H1 (cell line): ENCODE measurements at regions of chr3 and their contacts with region 1.

Region 1: GRCh38 chr3:45593708-45594609 is 592 bp upstream of the LIMD1 start:
- DNase-seq: peak in 1 of 2 experiments; percentile 88
- H3K4me3 ChIP-seq: peak overlapping the region; percentile 60 to 85 (median 74)
- H3K27ac ChIP-seq: peak overlapping the region; percentile 52; the same call in 1 of the 2 replicates
- H3K4me1 ChIP-seq: peaks cover 0 to 20% (median 10%) of the 10 kb centered on the region in 4 experiments; a peak in 6 of 7 replicates
- H3K27me3 ChIP-seq: no peaks in the 10 kb centered on the region; a peak in 2 of 7 replicates
- CTCF ChIP-seq: no peak
- EP300 ChIP-seq: no peak
- POLR2A ChIP-seq: peak in 1 of 2 experiments; percentile 68; a peak in 2 of 3 replicates
- RAD21 ChIP-seq: 0 out of 4 replicates have a peak, but pooled peaks of 1 of the 2 experiments have one; percentile 6

Region 2: GRCh38 chr3:45560281-45560971 is 33.5 kb before region 1 on chr3:
- CTCF ChIA-PET with region 1: no interaction called
- POLR2A ChIA-PET with region 1: no interaction called
- DNase-seq: no peak
- H3K4me3 ChIP-seq: no peak overlapping the region
- H3K27ac ChIP-seq: no peak overlapping the region
- H3K4me1 ChIP-seq: no peaks in the 10 kb centered on the region
- H3K27me3 ChIP-seq: no peaks in the 10 kb centered on the region
- CTCF ChIP-seq: no peak
- EP300 ChIP-seq: no peak
- POLR2A ChIP-seq: no peak
- RAD21 ChIP-seq: no peak

Region 3: GRCh38 chr3:45575381-45575923 is 18.5 kb before region 1 on chr3:
- CTCF ChIA-PET with region 1: interaction called, 23 read pairs
- POLR2A ChIA-PET with region 1: no interaction called
- DNase-seq: no peak
- H3K4me3 ChIP-seq: no peak overlapping the region
- H3K27ac ChIP-seq: no peak overlapping the region
- H3K4me1 ChIP-seq: peaks cover 5 to 35% (median 19%) of the 10 kb centered on the region in 4 experiments; a peak in 6 of 7 replicates
- H3K27me3 ChIP-seq: no peaks in the 10 kb centered on the region
- CTCF ChIP-seq: no peak
- EP300 ChIP-seq: no peak; a peak in 1 of 3 replicates
- POLR2A ChIP-seq: no peak
- RAD21 ChIP-seq: no peak

Region 4: GRCh38 chr3:45693941-45694521 is 100.1 kb after region 1 on chr3:
- CTCF ChIA-PET with region 1: no interaction called
- POLR2A ChIA-PET with region 1: no interaction called
- DNase-seq: no peak
- H3K4me3 ChIP-seq: no peak overlapping the region
- H3K27ac ChIP-seq: no peak overlapping the region
- H3K4me1 ChIP-seq: peaks cover 3 to 21% (median 6%) of the 10 kb centered on the region in 4 experiments; a peak in 5 of 7 replicates
- H3K27me3 ChIP-seq: no peaks in the 10 kb centered on the region
- CTCF ChIP-seq: no peak
- EP300 ChIP-seq: no peak
- POLR2A ChIP-seq: no peak
- RAD21 ChIP-seq: no peak